Calu3 (cell line): ENCODE measurements at regions of chr1 and their contacts with region 1.

Region 1: DNA sequence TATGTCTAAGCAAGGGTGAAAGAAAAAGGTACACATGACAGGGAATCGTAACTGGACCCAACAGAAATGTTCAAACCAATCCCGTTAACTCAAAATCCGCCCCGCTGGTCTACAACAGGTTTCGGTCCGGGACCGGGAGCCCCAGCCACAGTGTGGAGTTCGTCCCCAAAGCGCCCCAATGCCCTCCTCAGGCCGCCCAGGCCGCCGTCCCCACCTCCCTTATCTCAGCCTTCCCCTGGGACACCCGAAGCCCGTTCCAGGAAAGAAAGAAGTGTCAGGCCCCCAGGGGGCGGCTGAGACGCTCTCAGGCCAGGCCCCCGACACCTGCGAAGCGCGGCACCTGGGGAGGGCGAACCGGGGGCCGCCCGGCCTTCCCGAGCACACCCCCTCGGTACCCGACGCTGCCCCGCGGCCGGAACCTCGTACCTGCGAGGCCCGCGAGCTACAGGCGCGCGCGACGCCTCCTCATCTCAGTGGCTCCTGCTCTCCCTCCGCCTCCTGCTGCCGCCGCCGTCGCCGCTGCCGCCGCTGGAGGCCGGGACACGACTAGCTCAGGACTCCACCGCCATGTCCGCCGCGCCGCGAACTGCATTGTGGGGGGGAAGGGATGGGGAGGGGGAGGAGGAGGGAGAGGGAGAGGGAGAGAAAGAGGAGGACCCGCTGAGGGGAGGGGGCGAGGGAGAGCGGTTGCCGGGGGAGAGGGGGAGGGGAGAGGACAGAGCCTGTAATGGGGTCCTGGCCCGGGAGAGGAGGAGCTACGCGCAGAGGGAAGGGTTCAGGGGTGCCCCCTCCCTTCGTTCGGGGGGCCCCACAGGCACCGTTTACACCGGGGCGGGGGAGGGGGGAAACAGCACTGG is at the start of gene TUT4:
- DNase-seq: peak; percentile 72
- H3K4me3 Mint-ChIP-seq: no peak within 1 kb of the TSS
- H3K27ac Mint-ChIP-seq: no peak within 1 kb of the TSS
- H3K4me1 Mint-ChIP-seq: peaks cover 27% of the 10 kb centered on the region
- H3K27me3 Mint-ChIP-seq: no peaks in the 10 kb centered on the region
- CTCF ChIP-seq: no peak
- total RNA-seq, gene TUT4: 41.4 and 55.9 TPM in 2 replicates

Region 2: GRCh38 chr1:52825868-52826267 is 273.1 kb after region 1 on chr1:
- CTCF ChIA-PET with region 1: interaction called, 12 read pairs
- intact Hi-C with region 1: no loop called
- DNase-seq: no peak
- H3K4me3 Mint-ChIP-seq: no peak overlapping the region
- H3K27ac Mint-ChIP-seq: no peak overlapping the region
- H3K4me1 Mint-ChIP-seq: no peaks in the 10 kb centered on the region
- H3K27me3 Mint-ChIP-seq: no peaks in the 10 kb centered on the region
- CTCF ChIP-seq: peak; percentile 16

Region 3: DNA sequence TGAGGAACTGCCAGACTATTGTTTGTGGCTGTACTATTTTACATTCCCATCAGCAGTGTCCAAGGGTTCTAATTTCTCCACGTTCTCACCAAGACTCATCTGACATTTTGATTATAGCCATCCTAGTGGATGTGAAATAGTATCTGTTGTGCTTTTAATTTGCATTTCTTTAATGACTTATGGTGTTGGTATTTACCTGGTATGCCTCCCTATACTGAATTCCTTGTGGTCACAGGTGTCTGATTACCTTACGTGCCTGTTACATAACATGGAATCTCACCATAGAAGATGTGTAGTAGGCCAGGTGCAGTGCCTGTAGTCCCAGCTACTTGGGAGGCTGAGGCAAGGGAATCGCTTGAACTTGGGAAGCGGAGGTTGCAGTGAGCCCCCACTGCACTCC is 303.3 kb after region 1 on chr1:
- CTCF ChIA-PET with region 1: no interaction called
- intact Hi-C with region 1: no loop called
- DNase-seq: peak; percentile 11
- H3K4me3 Mint-ChIP-seq: no peak overlapping the region
- H3K27ac Mint-ChIP-seq: no peak overlapping the region
- H3K4me1 Mint-ChIP-seq: peaks cover 32% of the 10 kb centered on the region
- H3K27me3 Mint-ChIP-seq: no peaks in the 10 kb centered on the region
- CTCF ChIP-seq: no peak